ENCODE measurements at regions of chr6 and their contacts with region 1.

Region 1: DNA sequence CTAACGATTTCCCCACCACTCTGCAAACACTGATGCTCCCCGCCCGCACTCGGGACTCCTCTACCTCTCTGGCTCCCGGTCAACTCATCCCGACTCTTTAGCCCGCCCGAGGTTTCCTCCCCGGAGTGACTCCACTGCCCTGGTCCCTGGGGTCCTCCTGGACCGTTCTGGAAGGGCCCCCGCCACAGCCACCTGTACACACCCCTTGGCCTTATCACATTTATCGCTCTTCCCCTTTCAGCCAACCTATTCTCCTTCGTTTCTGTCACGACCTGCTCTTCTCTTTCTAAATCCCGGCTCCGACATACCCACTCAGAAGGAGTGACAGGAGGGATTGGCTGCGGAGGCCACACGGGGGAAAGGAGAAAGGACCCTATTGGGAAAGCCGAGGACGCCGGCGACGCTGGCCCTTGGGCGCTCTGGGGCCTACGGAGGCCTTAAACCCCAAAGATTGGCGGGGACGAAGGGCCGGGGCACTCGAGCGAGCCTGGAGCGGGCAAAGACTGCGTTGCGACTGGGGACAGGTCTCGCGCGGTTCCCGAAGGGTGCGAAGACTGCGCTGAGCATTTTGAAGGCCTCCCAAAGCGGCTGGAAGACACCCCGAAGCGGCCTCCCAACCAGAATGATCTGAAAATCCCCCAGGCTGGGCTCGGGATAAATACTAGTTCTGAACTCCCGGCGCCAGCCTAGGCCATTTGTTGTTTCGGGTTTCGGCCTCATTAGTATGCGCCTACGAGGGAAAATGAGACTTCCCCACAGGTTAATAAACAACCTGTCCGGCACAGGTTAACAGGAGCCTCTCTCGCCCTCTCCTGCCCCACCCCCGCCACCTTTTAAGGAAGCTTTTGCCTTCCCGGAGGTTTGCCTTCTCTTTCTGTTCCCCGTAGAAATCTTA is 9.2 kb downstream of the SIM1 start:
- DNase-seq: no peak
- H3K4me3 Mint-ChIP-seq: no peak overlapping the region
- H3K27ac Mint-ChIP-seq: no peak overlapping the region
- H3K4me1 Mint-ChIP-seq: peaks cover 3% of the 10 kb centered on the region
- H3K27me3 Mint-ChIP-seq: peaks cover 70% of the 10 kb centered on the region

Region 2: DNA sequence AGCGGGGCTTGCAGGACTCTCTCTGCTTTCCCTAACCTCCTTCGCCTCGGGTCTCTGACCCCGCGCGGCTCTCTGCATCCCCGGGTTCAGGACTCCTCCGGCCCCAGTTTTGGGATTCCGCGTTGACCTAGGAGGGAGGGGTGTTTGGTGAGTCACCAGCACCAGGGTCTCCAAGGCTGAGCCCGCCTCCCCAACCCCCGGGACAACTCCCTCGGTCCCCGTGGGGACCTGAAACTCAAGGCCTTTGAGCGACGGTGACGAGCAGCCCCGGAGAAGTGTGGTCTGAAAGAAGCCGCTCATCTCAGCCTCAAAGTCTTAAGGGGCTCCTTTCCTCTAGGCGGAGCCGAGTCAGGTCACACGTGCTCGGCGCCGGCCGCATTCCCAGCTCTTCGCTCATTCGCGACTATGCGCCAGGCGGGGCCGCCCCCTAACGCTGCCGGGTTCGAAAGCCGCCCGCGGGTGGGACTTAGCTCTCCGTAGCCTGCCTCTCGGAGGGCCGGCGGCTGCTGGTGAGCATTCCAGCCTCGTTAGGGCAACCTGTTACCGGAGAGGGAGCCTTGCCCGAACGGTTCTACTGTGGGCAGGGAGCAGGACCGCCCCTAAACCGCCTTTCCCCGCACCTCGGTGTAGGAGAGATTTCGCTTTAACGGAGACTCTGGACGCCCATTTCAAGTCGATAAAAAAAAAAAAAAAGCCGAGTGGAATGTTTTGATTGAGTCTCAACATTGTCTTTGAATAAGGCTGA is 851.9 kb before region 1 on chr6:
- CTCF ChIA-PET with region 1: no interaction called
- POLR2A ChIA-PET with region 1: no interaction called
- intact Hi-C with region 1: loop called (anchors 5 kb)
- DNase-seq: no peak
- H3K4me3 Mint-ChIP-seq: peak overlapping the region; percentile 35
- H3K27ac Mint-ChIP-seq: no peak overlapping the region
- H3K4me1 Mint-ChIP-seq: peaks cover 27% of the 10 kb centered on the region
- H3K27me3 Mint-ChIP-seq: peaks cover 81% of the 10 kb centered on the region

Region 3: GRCh38 chr6:101477436-101477835 is 1022.0 kb after region 1 on chr6:
- CTCF ChIA-PET with region 1: no interaction called
- POLR2A ChIA-PET with region 1: no interaction called
- intact Hi-C with region 1: no loop called
- DNase-seq: no peak
- H3K4me3 Mint-ChIP-seq: no peak overlapping the region
- H3K27ac Mint-ChIP-seq: no peak overlapping the region
- H3K4me1 Mint-ChIP-seq: no peaks in the 10 kb centered on the region
- H3K27me3 Mint-ChIP-seq: no peaks in the 10 kb centered on the region